A549 (cell line): ENCODE measurements at regions of chr19 and their contacts with region 1.

Region 1: GRCh38 chr19:56266051-56266450 is 6.5 kb upstream of the EDDM13 start:
- DNase-seq: no peak
- ATAC-seq: no peak
- H3K4me3 ChIP-seq: no peak overlapping the region
- H3K27ac ChIP-seq: no peak overlapping the region
- H3K4me1 ChIP-seq: no peaks in the 10 kb centered on the region
- CTCF ChIP-seq: no peak
- EP300 ChIP-seq: no peak
- POLR2A ChIP-seq: no peak
- RAD21 ChIP-seq: no peak

Region 2: DNA sequence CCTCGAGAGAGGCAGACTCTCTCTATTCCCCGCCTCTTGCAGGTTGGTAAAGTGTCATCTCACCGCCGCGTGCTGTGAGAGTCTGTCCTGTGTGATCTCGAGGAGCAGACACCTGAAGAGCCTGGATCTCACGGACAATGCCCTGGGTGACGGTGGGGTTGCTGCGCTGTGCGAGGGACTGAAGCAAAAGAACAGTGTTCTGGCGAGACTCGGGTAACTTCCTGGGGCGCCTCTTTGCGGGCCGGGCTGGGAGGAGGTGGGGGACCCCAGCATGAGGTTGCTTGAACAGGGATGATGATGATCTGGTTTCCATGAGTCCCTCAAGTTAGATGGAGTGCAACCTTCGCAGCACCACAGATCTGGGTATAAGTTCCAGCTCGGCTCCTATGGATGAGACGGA is 212.5 kb before region 1 on chr19:
- CTCF ChIA-PET with region 1: no interaction called
- POLR2A ChIA-PET with region 1: no interaction called
- DNase-seq: no peak
- ATAC-seq: no peak
- H3K4me3 ChIP-seq: no peak overlapping the region
- H3K27ac ChIP-seq: no peak overlapping the region
- H3K4me1 ChIP-seq: no peaks in the 10 kb centered on the region
- CTCF ChIP-seq: no peak
- EP300 ChIP-seq: no peak
- POLR2A ChIP-seq: no peak
- RAD21 ChIP-seq: no peak

Region 3: DNA sequence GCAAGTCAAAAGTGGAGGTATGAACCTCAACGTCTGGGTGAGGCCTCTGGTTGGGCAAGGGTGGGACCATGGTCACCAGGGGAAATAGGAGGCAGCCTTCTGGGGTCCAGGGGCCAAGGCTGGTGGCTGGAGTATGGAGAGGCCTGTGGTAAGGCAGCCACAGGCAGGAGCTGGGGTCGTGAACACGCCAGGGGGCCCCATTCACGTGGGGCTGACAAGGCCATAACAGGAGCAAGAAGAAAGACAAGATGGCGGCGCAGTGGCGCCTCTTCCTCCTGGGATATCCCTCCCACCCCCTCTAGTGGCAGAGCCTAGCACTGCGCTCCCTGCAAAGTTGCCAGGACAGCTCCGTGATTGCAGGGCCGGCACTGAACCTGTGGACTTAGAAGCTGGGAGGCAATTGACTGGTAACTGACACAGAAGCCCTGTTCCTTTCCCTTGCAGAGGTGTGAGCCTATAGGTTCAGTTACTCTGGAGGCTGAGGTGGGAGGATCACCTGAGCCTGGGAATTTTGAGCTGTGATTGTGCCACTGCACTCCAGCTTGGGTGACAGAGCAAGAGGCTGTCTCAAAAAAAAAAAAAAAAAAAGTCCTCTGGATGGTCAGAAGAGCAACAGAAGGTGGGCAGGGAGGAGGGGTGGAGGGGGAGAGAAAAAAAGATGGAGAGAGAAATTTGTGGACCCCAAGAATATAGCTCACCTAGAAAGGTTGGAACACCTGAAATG is 13.2 kb before region 1 on chr19:
- CTCF ChIA-PET with region 1: interaction called, 46 read pairs
- POLR2A ChIA-PET with region 1: no interaction called
- DNase-seq: peak; percentile 68 to 87
- ATAC-seq: peak; percentile 83 to 96; a peak in 5 of 6 replicates
- H3K4me3 ChIP-seq: no peak overlapping the region
- H3K27ac ChIP-seq: no peak overlapping the region
- H3K4me1 ChIP-seq: no peaks in the 10 kb centered on the region
- CTCF ChIP-seq: peak; percentile 35; the same call in 2 of the 3 replicates
- EP300 ChIP-seq: no peak
- POLR2A ChIP-seq: no peak
- RAD21 ChIP-seq: peak; percentile 20 to 67; a peak in 3 of 5 replicates

Region 4: GRCh38 chr19:56314562-56315077 is 48.6 kb after region 1 on chr19 and contains the start of gene ZSCAN5A:
- CTCF ChIA-PET with region 1: no interaction called
- POLR2A ChIA-PET with region 1: no interaction called
- DNase-seq: peak; percentile 97 to 98
- ATAC-seq: peak; percentile 87 to 91
- H3K4me3 ChIP-seq: peak within 1 kb of the TSS; percentile 65
- H3K27ac ChIP-seq: peak within 1 kb of the TSS; percentile 92 to 98
- H3K4me1 ChIP-seq: peaks cover 9% of the 10 kb centered on the region; the same call in 1 of the 3 replicates
- CTCF ChIP-seq: no peak
- EP300 ChIP-seq: no peak
- POLR2A ChIP-seq: peak; percentile 62
- RAD21 ChIP-seq: no peak
- polyA plus RNA-seq, gene ZSCAN5A: 13.3 and 16.1 TPM in 2 replicates